Activated CD4-positive, alpha-beta memory T cell treated with anti-CD3 and anti-CD28 coated beads for 36 hours (primary cell): ENCODE measurements at regions of chr4 and their contacts with region 1.

Region 1: GRCh38 chr4:82428969-82429727 is 1.1 kb downstream of the HNRNPDL start:
- DNase-seq: peak; percentile 95
- H3K4me3 Mint-ChIP-seq: peak overlapping the region; percentile 99
- H3K27ac Mint-ChIP-seq: peak overlapping the region; percentile 97
- H3K4me1 Mint-ChIP-seq: peaks cover 60% of the 10 kb centered on the region
- H3K27me3 Mint-ChIP-seq: no peaks in the 10 kb centered on the region

Region 2: DNA sequence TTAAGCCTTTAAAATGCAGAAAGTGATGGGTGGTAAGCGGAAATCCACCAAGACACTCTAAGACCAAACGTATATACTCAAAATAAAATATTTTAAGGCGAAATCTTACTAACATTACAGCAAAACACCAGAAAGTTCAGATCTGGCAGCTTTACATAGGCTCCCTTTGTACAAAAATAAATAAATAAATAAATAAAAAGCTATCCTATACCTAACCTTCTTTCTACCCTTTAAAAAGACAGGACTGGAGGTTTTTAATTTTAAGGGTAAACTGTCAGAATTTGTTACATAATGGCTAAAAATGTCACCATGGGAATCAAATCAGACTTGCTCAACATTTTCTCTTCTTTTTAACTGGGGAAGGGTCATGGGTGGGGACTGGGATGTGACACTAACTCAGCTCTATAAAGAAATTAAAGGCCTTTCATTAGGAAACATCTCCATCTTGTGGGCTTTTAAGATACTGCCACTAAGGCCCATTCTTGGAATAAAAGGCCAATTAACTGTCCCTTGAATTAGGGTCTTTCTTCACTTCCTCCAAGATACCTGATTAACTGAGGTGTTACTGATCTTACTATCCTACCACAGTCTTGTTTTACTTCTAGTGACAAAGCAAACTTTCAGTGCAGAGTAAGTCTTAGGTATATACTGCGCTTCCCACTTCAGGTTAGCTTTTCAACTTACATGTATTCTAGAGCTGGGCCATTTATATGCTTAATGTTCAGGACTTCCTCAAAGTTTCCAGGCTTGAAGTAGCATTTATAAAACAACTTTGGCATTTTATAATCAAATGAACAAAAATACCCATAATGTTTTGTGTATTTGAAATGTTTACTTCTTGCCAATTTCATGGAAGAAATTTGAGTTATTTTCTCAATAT is 68.6 kb before region 1 on chr4:
- CTCF ChIA-PET with region 1: interaction called, 25 read pairs
- POLR2A ChIA-PET with region 1: interaction called, 23 read pairs
- intact Hi-C with region 1: no loop called
- DNase-seq: no peak
- H3K4me3 Mint-ChIP-seq: no peak overlapping the region
- H3K27ac Mint-ChIP-seq: peak overlapping the region; percentile 13
- H3K4me1 Mint-ChIP-seq: peaks cover 81% of the 10 kb centered on the region
- H3K27me3 Mint-ChIP-seq: no peaks in the 10 kb centered on the region

Region 3: DNA sequence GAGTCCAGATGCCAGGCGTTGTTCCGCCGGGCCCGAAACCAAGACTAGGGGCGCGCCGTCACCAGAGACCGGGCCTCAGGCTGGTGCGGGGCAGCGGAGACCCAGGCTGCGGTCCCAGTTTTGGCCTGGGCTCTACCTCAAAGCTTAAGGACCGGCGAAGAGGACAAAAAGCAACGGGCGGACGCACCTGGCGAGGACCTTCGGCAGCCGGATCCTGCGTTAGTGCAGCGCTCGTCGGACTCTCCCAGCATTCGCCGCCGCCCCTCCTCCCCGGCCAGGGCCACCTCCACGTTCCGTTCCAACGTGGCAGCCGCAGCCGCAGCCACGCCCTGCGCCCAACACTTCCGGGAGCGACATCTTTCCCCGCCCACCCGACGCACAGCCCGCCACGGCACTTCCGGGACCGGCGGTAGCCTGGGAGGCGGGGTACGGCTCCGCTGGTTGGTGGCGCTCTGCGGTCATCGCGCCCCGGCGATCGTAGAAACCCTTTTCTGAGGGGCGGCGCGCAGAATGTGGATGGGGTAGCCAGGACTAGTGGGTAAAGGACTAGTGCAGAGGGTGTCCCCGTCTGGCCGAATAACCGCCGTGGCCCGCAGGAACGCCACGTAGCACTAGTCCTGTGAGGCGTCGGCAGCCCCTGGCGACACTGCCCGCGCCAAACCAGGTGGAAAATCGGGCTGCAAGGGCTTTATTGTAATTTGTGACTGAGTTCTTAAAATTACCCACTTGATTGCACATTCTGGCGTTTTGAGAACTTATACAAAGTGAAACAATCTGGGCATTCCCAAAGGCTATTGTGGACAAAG is 462.0 kb after region 1 on chr4 and contains the start of gene SEC31A:
- CTCF ChIA-PET with region 1: no interaction called
- POLR2A ChIA-PET with region 1: no interaction called
- intact Hi-C with region 1: loop called (anchors 1 kb)
- DNase-seq: peak; percentile 98
- H3K4me3 Mint-ChIP-seq: peak within 1 kb of the TSS; percentile 95
- H3K27ac Mint-ChIP-seq: peak within 1 kb of the TSS; percentile 95
- H3K4me1 Mint-ChIP-seq: peaks cover 35% of the 10 kb centered on the region
- H3K27me3 Mint-ChIP-seq: no peaks in the 10 kb centered on the region
- total RNA-seq, gene SEC31A: 87.8 to 88.1 TPM

Region 4: DNA sequence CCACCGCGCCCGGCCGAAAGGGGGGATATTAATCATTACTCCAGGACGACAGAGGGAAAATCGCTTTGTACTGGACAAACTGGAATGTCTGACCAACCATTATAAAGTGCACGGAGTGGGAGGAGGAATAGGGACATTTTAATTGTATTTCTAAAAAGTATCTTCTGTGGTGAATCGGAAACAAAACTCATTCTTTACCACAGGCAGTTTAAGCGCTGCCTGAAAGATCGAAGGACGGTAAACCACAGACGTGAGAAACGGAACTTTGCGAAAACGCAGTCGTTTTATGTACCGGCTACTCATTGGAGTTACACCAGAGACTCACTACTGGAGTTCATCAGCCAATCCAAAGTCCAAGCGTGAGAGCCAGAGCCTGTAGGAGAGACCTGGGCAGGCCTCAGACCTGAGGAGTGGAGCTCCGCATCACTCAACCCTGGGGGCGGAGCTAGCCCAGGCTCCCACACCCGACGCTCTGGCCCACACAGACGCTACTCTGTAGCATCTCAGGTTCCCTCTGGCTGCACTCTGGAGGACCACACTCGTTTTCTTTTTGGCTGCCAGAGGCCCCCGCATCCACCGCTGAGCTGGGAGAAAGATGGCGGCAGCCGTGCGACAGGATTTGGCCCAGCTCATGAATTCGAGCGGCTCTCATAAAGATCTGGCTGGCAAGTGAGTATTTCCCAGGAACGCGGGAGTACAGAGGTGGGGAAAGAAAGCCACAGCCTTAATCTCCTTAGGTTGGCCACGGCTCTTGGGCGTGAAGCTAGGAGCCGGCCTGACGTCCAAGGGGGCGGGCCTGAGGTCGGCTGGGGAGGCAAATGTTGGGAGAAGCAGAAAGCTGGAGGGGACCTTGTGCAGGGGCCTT is 605.7 kb after region 1 on chr4 and contains the start of gene COPS4:
- CTCF ChIA-PET with region 1: no interaction called
- POLR2A ChIA-PET with region 1: no interaction called
- intact Hi-C with region 1: loop called (anchors 1 kb)
- DNase-seq: peak; percentile 97
- H3K4me3 Mint-ChIP-seq: peak within 1 kb of the TSS; percentile 85
- H3K27ac Mint-ChIP-seq: peak within 1 kb of the TSS; percentile 98
- H3K4me1 Mint-ChIP-seq: peaks cover 28% of the 10 kb centered on the region
- H3K27me3 Mint-ChIP-seq: no peaks in the 10 kb centered on the region
- total RNA-seq, gene COPS4: 38.5 to 40.6 TPM